ENCODE measurements at regions of chr2 and their contacts with region 1.

Region 1: GRCh38 chr2:205680067-205680466 is 2.2 kb upstream of the NRP2 start:
- DNase-seq: no peak
- ATAC-seq: peak; percentile 32
- H3K4me3 Mint-ChIP-seq: peak overlapping the region; percentile 44
- H3K27ac Mint-ChIP-seq: peak overlapping the region; percentile 37
- H3K4me1 Mint-ChIP-seq: peaks cover 40% of the 10 kb centered on the region
- H3K27me3 Mint-ChIP-seq: peaks cover 35% of the 10 kb centered on the region
- CTCF ChIP-seq: no peak

Region 2: DNA sequence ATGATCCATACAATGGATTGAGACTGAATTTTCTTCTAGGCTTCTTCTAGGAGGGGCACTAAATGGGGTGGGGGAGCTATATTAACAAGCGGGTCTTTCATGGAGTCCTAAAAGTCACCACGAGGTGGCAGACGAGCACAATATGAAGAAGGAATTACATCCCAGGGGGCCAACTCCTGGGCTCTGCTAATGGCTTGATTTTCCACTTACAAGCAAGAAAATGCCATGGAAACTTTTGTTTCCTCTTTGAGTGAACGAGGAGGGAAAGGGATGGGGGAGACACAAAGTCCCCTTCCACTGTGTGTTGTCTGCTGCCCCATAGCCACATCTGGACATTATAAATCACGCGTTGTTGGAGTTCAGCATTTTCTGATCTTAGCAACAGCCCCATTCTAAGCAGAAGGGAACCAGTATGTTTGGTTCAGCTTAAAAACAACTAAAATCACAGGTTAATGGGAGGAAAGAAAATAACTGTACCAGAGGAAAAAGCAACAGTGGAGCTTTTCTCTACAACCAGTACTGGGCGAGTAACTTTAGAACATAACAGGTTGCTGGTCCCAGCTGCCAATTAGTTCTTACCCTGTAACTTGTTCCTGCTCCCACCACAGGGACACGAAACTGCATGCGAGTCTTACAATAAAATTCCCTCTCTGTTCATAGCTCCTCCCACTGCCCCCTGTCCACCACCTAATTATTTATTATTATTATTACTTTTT is 1419.7 kb before region 1 on chr2:
- CTCF ChIA-PET with region 1: interaction called, 12 read pairs
- POLR2A ChIA-PET with region 1: no interaction called
- intact Hi-C with region 1: no loop called
- DNase-seq: no peak
- ATAC-seq: no peak
- H3K4me3 Mint-ChIP-seq: no peak overlapping the region
- H3K27ac Mint-ChIP-seq: no peak overlapping the region
- H3K4me1 Mint-ChIP-seq: no peaks in the 10 kb centered on the region
- H3K27me3 Mint-ChIP-seq: peaks cover 18% of the 10 kb centered on the region
- CTCF ChIP-seq: no peak

Region 3: GRCh38 chr2:205323929-205324328 is 356.1 kb before region 1 on chr2:
- CTCF ChIA-PET with region 1: interaction called, 3 read pairs
- POLR2A ChIA-PET with region 1: no interaction called
- intact Hi-C with region 1: loop called (anchors 5 kb)
- DNase-seq: no peak
- ATAC-seq: no peak
- H3K4me3 Mint-ChIP-seq: no peak overlapping the region
- H3K27ac Mint-ChIP-seq: no peak overlapping the region
- H3K4me1 Mint-ChIP-seq: peaks cover 10% of the 10 kb centered on the region
- H3K27me3 Mint-ChIP-seq: peaks cover 9% of the 10 kb centered on the region
- CTCF ChIP-seq: no peak

Region 4: GRCh38 chr2:205714058-205714776 is 34.1 kb after region 1 on chr2:
- CTCF ChIA-PET with region 1: interaction called, 5 read pairs
- POLR2A ChIA-PET with region 1: interaction called, 21 read pairs
- intact Hi-C with region 1: no loop called
- DNase-seq: no peak
- ATAC-seq: peak; percentile 81
- H3K4me3 Mint-ChIP-seq: peak overlapping the region; percentile 37
- H3K27ac Mint-ChIP-seq: peak overlapping the region; percentile 74
- H3K4me1 Mint-ChIP-seq: peaks cover 61% of the 10 kb centered on the region
- H3K27me3 Mint-ChIP-seq: no peaks in the 10 kb centered on the region
- CTCF ChIP-seq: no peak

Region 5: GRCh38 chr2:205800773-205801172 is 120.7 kb after region 1 on chr2:
- CTCF ChIA-PET with region 1: no interaction called
- POLR2A ChIA-PET with region 1: no interaction called
- intact Hi-C with region 1: no loop called
- DNase-seq: no peak
- ATAC-seq: no peak
- H3K4me3 Mint-ChIP-seq: no peak overlapping the region
- H3K27ac Mint-ChIP-seq: no peak overlapping the region
- H3K4me1 Mint-ChIP-seq: no peaks in the 10 kb centered on the region
- H3K27me3 Mint-ChIP-seq: peaks cover 16% of the 10 kb centered on the region
- CTCF ChIP-seq: no peak

Region 6: GRCh38 chr2:205925373-205926337 is 245.6 kb after region 1 on chr2:
- CTCF ChIA-PET with region 1: no interaction called
- POLR2A ChIA-PET with region 1: no interaction called
- intact Hi-C with region 1: loop called (anchors 5 kb)
- DNase-seq: peak; percentile 49
- ATAC-seq: peak; percentile 57
- H3K4me3 Mint-ChIP-seq: no peak overlapping the region
- H3K27ac Mint-ChIP-seq: no peak overlapping the region
- H3K4me1 Mint-ChIP-seq: peaks cover 7% of the 10 kb centered on the region
- H3K27me3 Mint-ChIP-seq: peaks cover 38% of the 10 kb centered on the region
- CTCF ChIP-seq: no peak

Region 7: GRCh38 chr2:206045251-206045650 is 365.2 kb after region 1 on chr2:
- CTCF ChIA-PET with region 1: no interaction called
- POLR2A ChIA-PET with region 1: no interaction called
- intact Hi-C with region 1: no loop called
- DNase-seq: no peak
- ATAC-seq: no peak
- H3K4me3 Mint-ChIP-seq: no peak overlapping the region
- H3K27ac Mint-ChIP-seq: no peak overlapping the region
- H3K4me1 Mint-ChIP-seq: peaks cover 7% of the 10 kb centered on the region
- H3K27me3 Mint-ChIP-seq: no peaks in the 10 kb centered on the region
- CTCF ChIP-seq: no peak